Activated CD8-positive, alpha-beta T cell treated with anti-CD3 and anti-CD28 coated beads, Interleukin-2, amount 10 ng/mL, durations not matched to agents 7 days and 5 days (primary cell): ENCODE measurements at regions of chr22 and their contacts with region 1.

Region 1: GRCh38 chr22:40533712-40534378 is 102.7 kb downstream of the MRTFA start:
- DNase-seq: peak; percentile 79
- ATAC-seq: peak; percentile 93
- H3K4me3 Mint-ChIP-seq: peak overlapping the region; percentile 89
- H3K27ac Mint-ChIP-seq: peak overlapping the region; percentile 92
- H3K4me1 Mint-ChIP-seq: peaks cover 55% of the 10 kb centered on the region
- H3K27me3 Mint-ChIP-seq: no peaks in the 10 kb centered on the region

Region 2: DNA sequence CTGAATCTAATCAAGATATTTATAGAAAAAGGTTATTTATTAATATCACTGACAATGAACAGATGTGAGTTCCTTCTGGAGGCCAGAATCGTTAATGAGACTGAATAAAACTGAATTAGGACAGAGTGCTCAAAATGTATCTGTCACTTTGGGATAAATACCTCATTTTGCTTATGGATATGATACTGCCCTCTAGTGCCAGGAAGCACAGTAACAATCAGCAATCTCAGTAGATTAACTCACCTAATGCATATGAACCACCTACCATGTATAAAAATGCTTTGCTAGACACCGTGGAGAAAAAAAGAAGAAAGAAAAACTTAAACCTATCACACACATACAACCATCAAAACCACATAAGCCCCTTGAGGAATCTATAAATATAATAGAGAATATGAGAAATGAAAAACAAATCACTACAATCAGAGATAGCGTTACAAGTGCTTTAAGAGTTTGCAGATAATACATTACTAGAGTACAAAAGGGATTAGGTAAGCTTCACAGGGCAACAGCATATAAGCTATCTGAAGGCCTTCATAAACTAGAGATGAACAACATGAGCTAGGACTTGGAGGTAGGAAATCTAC is 46.1 kb before region 1 on chr22:
- CTCF ChIA-PET with region 1: interaction called, 11 read pairs
- POLR2A ChIA-PET with region 1: no interaction called
- DNase-seq: peak; percentile 29
- ATAC-seq: peak; percentile 62
- H3K4me3 Mint-ChIP-seq: no peak overlapping the region
- H3K27ac Mint-ChIP-seq: no peak overlapping the region
- H3K4me1 Mint-ChIP-seq: peaks cover 34% of the 10 kb centered on the region
- H3K27me3 Mint-ChIP-seq: no peaks in the 10 kb centered on the region

Region 3: DNA sequence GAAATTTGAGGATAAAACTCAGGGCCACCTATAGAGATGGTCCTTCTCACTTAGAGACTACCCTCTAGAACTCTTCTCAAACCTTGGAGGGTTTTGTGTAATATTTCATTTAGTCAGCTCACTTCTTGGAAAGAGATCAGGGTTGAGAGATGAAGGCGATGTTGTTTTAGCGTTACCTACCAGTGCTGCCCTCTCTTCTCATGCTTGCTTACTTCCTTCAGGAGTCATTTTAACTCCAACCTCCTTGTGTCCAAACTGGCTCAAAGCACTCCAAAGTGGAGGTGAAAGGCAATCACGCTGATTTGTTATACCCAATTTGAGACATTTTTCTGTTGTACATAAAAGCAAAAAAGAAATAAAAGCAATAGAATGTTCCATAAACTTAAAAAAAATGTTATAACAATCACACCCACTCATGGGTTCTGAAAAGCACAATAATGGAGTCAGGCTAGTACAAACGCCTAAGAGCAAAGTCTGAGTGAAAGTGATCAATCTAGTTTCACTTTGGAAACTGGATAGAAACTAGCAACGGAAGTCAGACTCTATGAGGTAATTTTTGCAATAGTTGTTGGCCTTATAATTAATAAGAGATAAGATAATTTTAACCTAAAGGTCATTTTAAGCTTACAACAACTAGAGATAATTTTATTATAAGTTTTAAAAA is 14.4 kb before region 1 on chr22:
- CTCF ChIA-PET with region 1: interaction called, 54 read pairs
- POLR2A ChIA-PET with region 1: interaction called, 6 read pairs
- DNase-seq: no peak
- ATAC-seq: peak; percentile 94
- H3K4me3 Mint-ChIP-seq: peak overlapping the region; percentile 68
- H3K27ac Mint-ChIP-seq: peak overlapping the region; percentile 88
- H3K4me1 Mint-ChIP-seq: peaks cover 26% of the 10 kb centered on the region
- H3K27me3 Mint-ChIP-seq: no peaks in the 10 kb centered on the region

Region 4: DNA sequence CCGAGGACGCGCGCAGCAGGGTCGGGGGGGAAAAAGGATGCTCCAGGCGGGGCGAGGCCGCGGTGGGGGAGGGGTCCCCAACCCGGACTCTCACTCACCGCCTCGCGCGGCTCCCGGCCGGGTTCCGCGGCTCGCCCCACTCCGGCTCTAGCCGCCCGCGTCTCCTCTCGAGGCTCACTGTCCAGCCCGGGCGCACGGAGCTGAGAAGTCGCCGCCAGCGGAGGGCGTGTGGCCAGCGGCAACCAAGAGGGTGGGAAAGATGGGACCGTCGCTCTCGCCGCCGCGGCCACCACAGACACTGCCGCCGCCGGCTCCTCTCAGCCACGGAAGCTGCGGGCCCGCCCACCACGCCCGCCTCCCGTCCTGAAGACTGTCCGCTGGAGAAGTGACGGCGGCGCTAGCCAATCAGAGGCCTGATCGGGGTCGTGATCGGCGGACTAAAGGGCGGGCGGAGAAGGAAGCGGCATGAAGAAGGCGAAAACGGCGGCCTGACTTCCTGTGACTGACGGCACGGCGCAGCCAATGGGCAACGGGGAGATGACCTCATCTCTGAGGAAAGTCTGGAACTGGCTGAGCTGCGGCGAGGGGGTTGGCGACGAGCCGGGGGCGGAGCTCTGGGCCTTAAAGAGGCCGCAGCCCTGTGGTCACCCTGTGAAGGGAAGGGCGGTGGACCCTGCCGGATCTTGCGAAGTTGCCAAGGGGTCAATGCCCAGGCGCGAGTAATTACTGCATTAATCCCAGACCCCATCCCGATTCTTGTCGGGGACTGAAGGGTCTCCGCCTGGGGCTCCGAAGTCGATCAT is 102.7 kb after region 1 on chr22 and contains the start of gene MRTFA:
- CTCF ChIA-PET with region 1: interaction called, 24 read pairs
- POLR2A ChIA-PET with region 1: interaction called, 41 read pairs
- DNase-seq: peak; percentile 100
- ATAC-seq: peak; percentile 97
- H3K4me3 Mint-ChIP-seq: peak within 1 kb of the TSS; percentile 94
- H3K27ac Mint-ChIP-seq: peak within 1 kb of the TSS; percentile 96
- H3K4me1 Mint-ChIP-seq: peaks cover 25% of the 10 kb centered on the region
- H3K27me3 Mint-ChIP-seq: no peaks in the 10 kb centered on the region
- total RNA-seq, gene MRTFA: 65.0 to 65.1 TPM